ENCODE measurements at regions of chr14 and their contacts with region 1.

Region 1: DNA sequence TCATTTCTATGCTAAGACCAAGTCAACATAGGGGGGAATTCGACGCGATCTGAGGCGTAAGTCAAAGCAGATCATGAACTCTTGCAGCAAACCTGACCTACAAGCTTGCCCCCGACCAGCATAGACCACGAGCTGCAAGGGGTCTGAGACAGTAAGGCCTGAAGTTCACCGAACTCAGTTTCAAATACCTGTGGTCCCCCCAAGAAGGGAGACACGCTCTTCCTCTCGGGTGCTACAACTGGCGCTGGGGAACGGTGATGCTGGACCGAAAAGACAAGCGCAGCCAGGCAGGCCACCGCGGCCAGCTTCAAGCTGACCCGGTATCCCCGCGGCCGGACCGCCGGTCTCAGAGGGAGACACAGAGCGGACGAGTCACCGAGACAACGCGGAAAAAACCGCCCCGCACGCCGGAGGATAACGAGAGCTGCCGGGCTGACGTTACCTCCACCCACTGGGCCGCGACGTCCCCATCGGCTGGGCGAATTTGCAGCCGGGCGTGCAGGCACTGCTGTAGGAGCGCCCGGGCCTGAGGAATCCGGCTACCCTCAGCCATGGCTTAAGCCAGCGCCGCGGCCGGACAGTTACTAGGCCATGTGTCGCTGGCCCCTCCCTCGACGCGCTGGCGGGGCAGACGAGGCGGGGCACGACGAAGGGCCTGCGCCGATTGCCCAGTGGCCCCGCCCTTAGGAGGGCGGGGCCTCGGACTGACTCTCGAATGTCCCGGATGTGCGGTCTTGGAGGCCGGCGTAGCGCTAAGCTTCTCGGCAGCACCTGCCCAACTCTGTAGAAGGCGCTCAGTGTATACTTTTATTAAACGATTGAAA is at the start of gene DTD2:
- H3K4me3 Mint-ChIP-seq: peak within 1 kb of the TSS; percentile 90
- H3K27ac Mint-ChIP-seq: peak within 1 kb of the TSS; percentile 92
- H3K4me1 Mint-ChIP-seq: peaks cover 13% of the 10 kb centered on the region
- H3K27me3 Mint-ChIP-seq: peaks cover 2% of the 10 kb centered on the region

Region 2: GRCh38 chr14:30822080-30822571 is 634.9 kb before region 1 on chr14:
- intact Hi-C with region 1: no loop called
- H3K4me3 Mint-ChIP-seq: no peak overlapping the region
- H3K27ac Mint-ChIP-seq: no peak overlapping the region
- H3K4me1 Mint-ChIP-seq: no peaks in the 10 kb centered on the region
- H3K27me3 Mint-ChIP-seq: no peaks in the 10 kb centered on the region

Region 3: GRCh38 chr14:31420319-31421111 is 36.5 kb before region 1 on chr14 and contains the start of gene HEATR5A:
- intact Hi-C with region 1: loop called (anchors 2 kb)
- H3K4me3 Mint-ChIP-seq: peak within 1 kb of the TSS; percentile 97
- H3K27ac Mint-ChIP-seq: peak within 1 kb of the TSS; percentile 94
- H3K4me1 Mint-ChIP-seq: peaks cover 32% of the 10 kb centered on the region
- H3K27me3 Mint-ChIP-seq: no peaks in the 10 kb centered on the region

Region 4: DNA sequence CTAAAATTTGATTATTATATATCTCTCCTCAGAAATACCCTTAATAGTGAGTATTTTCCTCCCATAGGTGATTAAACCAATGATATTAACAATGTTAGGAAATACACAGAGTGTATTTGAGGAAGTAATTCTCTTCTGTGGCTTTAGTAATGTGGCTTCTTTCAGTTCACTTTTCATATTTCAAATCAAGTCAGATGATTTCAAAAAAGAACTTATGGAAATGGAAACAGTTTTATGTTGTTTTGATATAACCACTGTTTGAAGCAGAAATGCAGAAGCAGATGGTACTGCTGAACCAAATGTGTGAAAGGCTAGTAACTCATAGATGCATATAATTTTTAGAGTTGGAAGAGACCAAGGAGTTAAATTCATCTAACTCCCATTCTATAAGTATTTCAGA is 32.6 kb after region 1 on chr14:
- intact Hi-C with region 1: loop called (anchors 2 kb)
- H3K4me3 Mint-ChIP-seq: no peak overlapping the region
- H3K27ac Mint-ChIP-seq: peak overlapping the region; percentile 67
- H3K4me1 Mint-ChIP-seq: peaks cover 57% of the 10 kb centered on the region
- H3K27me3 Mint-ChIP-seq: peaks cover 22% of the 10 kb centered on the region

Measured in dendritic cell treated with granulocyte-macrophage colony-stimulating factor and Interleukin-4, amounts not matched to agents 40 ng/mL and 50 ng/mL, for 4 days (primary cell).